Activated CD4-positive, alpha-beta memory T cell treated with anti-CD3 and anti-CD28 coated beads, Interleukin-2, amount 10 ng/mL, durations not matched to agents 7 days and 5 days (primary cell): ENCODE measurements at regions of chr3 and their contacts with region 1.

Region 1: DNA sequence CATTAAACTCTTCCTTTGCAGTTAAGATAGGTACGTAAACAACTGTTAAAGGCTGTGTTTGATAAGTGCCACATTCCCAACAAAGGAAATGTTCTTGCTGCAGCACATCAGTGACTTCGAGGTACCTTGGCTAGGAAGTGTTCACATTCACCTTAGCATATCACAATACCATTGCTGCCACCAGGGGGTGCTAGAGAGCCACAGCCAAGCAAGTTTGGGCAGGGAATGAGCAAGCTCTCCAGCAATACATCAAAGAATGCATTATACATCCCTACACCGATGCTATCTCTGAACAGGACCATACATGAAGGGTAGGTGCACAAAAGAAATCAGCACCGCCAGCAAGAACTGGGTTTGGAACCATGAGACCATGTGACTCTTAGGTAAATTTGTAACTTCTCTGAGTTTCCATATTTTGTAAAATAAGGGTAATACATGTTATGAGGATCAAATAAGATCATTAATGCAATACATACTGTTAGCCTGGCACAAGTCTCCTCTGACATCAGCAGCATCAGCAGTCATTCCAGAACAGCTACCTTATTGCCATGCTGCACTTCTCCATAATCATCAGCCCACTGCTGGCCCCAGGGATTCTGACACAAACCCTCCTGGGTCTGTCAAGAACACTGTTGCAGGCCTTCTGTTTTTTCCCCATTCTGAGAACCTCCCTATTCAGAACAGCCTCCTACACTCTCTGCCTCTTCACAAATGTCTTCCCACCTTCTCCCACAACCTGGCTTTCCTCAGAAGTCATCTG is 37.6 kb downstream of the RYK start:
- DNase-seq: peak; percentile 83
- H3K4me3 Mint-ChIP-seq: no peak overlapping the region
- H3K27ac Mint-ChIP-seq: no peak overlapping the region
- H3K4me1 Mint-ChIP-seq: peaks cover 8% of the 10 kb centered on the region
- H3K27me3 Mint-ChIP-seq: no peaks in the 10 kb centered on the region

Region 2: GRCh38 chr3:134197681-134198261 is 15.3 kb before region 1 on chr3:
- CTCF ChIA-PET with region 1: interaction called, 14 read pairs
- POLR2A ChIA-PET with region 1: interaction called, 3 read pairs
- DNase-seq: no peak
- H3K4me3 Mint-ChIP-seq: no peak overlapping the region
- H3K27ac Mint-ChIP-seq: no peak overlapping the region
- H3K4me1 Mint-ChIP-seq: peaks cover 2% of the 10 kb centered on the region
- H3K27me3 Mint-ChIP-seq: no peaks in the 10 kb centered on the region

Region 3: DNA sequence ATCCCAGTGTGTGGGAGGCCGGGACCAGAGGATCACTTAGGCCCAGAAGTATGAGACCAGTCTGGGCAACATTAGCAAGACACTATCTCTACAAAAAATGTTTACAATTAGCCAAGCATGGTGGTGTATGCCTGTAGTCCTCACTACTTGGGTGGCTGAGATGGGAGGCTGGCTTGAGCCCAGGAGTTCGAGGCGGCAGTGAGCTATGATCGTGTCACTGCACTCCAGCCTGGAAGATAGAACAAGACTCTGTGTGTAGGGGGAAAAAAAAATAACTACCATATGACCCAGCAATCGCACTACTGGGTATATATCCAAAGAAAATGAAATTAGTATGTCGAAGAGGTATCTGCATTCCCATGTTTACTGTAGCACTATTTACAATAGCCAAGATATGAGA is 14.9 kb after region 1 on chr3:
- CTCF ChIA-PET with region 1: interaction called, 34 read pairs
- POLR2A ChIA-PET with region 1: no interaction called
- DNase-seq: no peak
- H3K4me3 Mint-ChIP-seq: no peak overlapping the region
- H3K27ac Mint-ChIP-seq: no peak overlapping the region
- H3K4me1 Mint-ChIP-seq: peaks cover 7% of the 10 kb centered on the region
- H3K27me3 Mint-ChIP-seq: peaks cover 5% of the 10 kb centered on the region